Heart right ventricle (tissue), 16 donors: ENCODE measurements at regions of chr6 and their contacts with region 1.

Region 1: DNA sequence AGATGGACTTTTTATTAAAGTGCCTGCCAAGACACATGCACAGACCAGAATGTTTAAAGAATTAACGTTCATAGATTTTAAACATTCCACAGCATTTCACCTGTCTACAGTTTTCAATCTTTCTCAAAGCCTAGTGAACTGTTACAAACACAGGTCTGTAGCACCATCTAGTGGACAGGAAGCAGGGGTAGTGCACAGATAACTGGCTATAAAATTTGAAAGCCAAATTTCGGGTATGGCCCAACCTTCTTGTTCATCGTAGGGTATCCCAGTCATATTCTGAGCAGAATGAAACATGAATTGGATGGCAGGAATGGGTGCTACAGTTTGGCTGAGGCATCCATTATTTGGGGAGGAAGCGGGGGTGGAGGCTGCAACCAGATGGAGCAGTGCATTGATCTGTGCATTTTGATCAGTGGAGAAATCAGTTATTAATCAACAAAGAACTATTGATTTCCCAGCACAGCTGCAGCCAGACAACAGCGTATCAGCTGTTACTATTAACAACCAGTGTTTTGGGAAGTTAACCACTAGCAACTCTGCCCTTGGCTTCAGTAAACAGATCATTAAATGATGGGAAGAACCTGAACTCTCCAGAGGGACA is 56.1 kb upstream of the B3GAT2 start:
- DNase-seq: peak in 1 of 2 donors; percentile 36
- ATAC-seq: peak in 6 of 8 donors; percentile 55 to 87 (median 76)
- H3K4me3 ChIP-seq: no peak overlapping the region
- H3K27ac ChIP-seq: no peak overlapping the region
- H3K4me1 ChIP-seq: no peaks in the 10 kb centered on the region
- H3K27me3 ChIP-seq: no peaks in the 10 kb centered on the region
- CTCF ChIP-seq: peak; percentile 49 to 82 (median 78)

Region 2: GRCh38 chr6:70310063-70310694 is 702.8 kb before region 1 on chr6:
- intact Hi-C with region 1: loop called in 2 of 10 experiments (anchors 5 kb)
- DNase-seq: no peak
- ATAC-seq: no peak
- H3K4me3 ChIP-seq: no peak overlapping the region
- H3K27ac ChIP-seq: no peak overlapping the region
- H3K4me1 ChIP-seq: peaks cover 0 to 6% (median 0%) of the 10 kb centered on the region in 9 donors
- H3K27me3 ChIP-seq: peaks cover 0 to 11% (median 0%) of the 10 kb centered on the region in 7 donors
- CTCF ChIP-seq: peak; percentile 31 to 77 (median 63)

Region 3: GRCh38 chr6:70706491-70707123 is 306.4 kb before region 1 on chr6:
- intact Hi-C with region 1: loop called in 2 of 10 experiments (anchors 5 kb)
- DNase-seq: no peak
- ATAC-seq: no peak
- H3K4me3 ChIP-seq: no peak overlapping the region
- H3K27ac ChIP-seq: no peak overlapping the region
- H3K4me1 ChIP-seq: peaks cover 0 to 38% (median 17%) of the 10 kb centered on the region in 9 donors
- H3K27me3 ChIP-seq: no peaks in the 10 kb centered on the region
- CTCF ChIP-seq: peak; percentile 55 to 80 (median 68)